ENCODE measurements at regions of chr9 and their contacts with region 1.

Region 1: GRCh38 chr9:98848450-98849149 is 41.1 kb downstream of the GALNT12 start:
- DNase-seq: peak; percentile 87 to 95 (median 92)
- ATAC-seq: peak; percentile 98 to 99 (median 98)
- H3K4me3 ChIP-seq: peak overlapping the region in 10 of 12 donors; percentile 13 to 62 (median 42)
- H3K27ac ChIP-seq: peak overlapping the region in 7 of 12 donors; percentile 2 to 78 (median 40)
- H3K4me1 ChIP-seq: peaks cover 0 to 9% (median 3%) of the 10 kb centered on the region in 12 donors
- H3K27me3 ChIP-seq: no peaks in the 10 kb centered on the region
- CTCF ChIP-seq: peak; percentile 87 to 98 (median 93)
- POLR2A ChIP-seq: no peak

Region 2: DNA sequence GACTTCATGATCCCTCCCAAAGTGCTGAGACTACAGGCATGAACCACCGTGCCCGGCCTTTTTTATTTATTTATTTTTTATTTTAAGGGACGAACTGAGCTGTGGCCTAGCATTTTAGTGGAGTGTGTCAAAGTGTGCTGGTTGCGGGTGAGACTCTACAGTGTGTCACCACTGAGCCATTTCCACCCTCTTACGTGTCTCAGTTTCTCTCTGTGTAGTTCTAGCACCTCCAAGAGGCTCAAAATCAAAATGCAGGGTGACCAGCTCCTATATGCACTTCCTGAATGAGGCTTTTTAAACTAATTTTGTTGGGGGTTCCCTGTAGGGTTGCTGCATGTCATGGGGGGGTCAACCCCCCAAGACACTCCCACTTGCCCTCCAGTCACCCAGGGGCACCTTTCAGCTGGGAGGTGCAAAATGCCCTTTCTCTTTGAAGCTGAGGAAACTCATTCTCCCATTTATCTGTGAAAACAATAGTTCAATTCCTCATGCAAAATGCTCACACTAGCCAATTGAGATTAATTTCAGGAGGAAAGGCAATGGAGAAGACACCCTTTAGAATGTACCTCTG is 164.4 kb after region 1 on chr9:
- intact Hi-C with region 1: loop called in 4 of 10 experiments (anchors 2 to 5 kb)
- DNase-seq: no peak
- ATAC-seq: peak; percentile 64 to 88 (median 82)
- H3K4me3 ChIP-seq: no peak overlapping the region
- H3K27ac ChIP-seq: peak overlapping the region in 1 of 12 donors; percentile 37
- H3K4me1 ChIP-seq: peaks cover 0 to 8% (median 0%) of the 10 kb centered on the region in 12 donors
- H3K27me3 ChIP-seq: no peaks in the 10 kb centered on the region
- CTCF ChIP-seq: peak; percentile 22 to 69 (median 51)
- POLR2A ChIP-seq: no peak

Region 3: GRCh38 chr9:99140685-99141314 is 292.2 kb after region 1 on chr9:
- intact Hi-C with region 1: loop called in 8 of 10 experiments (anchors 1 to 5 kb)
- DNase-seq: peak in 4 of 5 donors; percentile 31 to 49 (median 36)
- ATAC-seq: peak in 3 of 4 donors; percentile 85 to 90 (median 89)
- H3K4me3 ChIP-seq: no peak overlapping the region
- H3K27ac ChIP-seq: peak overlapping the region in 3 of 12 donors; percentile 10 to 48 (median 23)
- H3K4me1 ChIP-seq: peaks cover 0 to 47% (median 6%) of the 10 kb centered on the region in 12 donors
- H3K27me3 ChIP-seq: no peaks in the 10 kb centered on the region
- CTCF ChIP-seq: peak; percentile 75 to 95 (median 88)
- POLR2A ChIP-seq: no peak

Measured in heart left ventricle (tissue), 16 donors.